ENCODE measurements at regions of chr1 and their contacts with region 1.

Region 1: GRCh38 chr1:23964790-23965740 is 5.4 kb downstream of the PNRC2 start:
- DNase-seq: no peak
- ATAC-seq: no peak
- H3K4me3 ChIP-seq: no peak overlapping the region
- H3K27ac ChIP-seq: no peak overlapping the region
- H3K4me1 ChIP-seq: 0 out of 2 replicates have a peak, but pooled peaks cover 6% of the 10 kb centered on the region
- H3K27me3 ChIP-seq: no peaks in the 10 kb centered on the region
- CTCF ChIP-seq: no peak

Region 2: GRCh38 chr1:23867953-23868556 is 97.0 kb before region 1 on chr1 and contains the start of gene FUCA1:
- CTCF ChIA-PET with region 1: no interaction called
- POLR2A ChIA-PET with region 1: interaction called, 3 read pairs
- intact Hi-C with region 1: loop called (anchors 5 kb)
- DNase-seq: peak; percentile 98
- ATAC-seq: peak; percentile 90
- H3K4me3 ChIP-seq: peak within 1 kb of the TSS; percentile 82
- H3K27ac ChIP-seq: no peak within 1 kb of the TSS
- H3K4me1 ChIP-seq: peaks cover 35% of the 10 kb centered on the region
- H3K27me3 ChIP-seq: no peaks in the 10 kb centered on the region
- CTCF ChIP-seq: peak; percentile 84
- total RNA-seq, gene FUCA1: 20.3 and 23.4 TPM in 2 replicates

Region 3: DNA sequence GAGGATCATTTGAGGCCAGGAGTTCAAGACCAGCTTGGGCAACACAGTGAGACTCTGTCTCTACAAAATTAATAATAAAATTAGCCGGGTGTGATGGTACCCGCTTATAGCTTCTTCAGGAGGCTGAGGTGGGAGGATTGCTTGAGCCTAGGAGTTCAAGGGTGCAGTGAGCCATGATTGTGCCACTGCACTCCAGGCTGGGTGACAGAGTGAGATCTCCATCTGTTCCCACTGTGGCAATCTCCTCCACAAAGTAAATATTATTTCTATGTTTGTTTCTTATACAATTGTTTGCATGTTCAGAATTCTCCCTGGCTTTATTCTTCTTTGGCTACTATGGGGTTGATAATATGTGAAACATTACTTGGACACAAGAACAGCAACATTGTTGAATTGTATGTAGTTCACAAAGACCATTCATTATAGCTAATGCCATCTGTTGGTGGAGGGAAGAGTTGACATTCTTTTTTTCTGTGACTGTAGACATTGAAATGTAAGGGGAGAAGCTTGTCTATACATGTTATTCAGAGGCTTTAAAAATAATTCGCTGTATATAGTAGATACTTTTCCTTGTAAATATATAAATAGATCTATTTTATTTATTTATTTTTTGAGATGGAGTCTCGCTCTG is 62.9 kb after region 1 on chr1:
- CTCF ChIA-PET with region 1: no interaction called
- POLR2A ChIA-PET with region 1: no interaction called
- intact Hi-C with region 1: loop called (anchors 2 kb)
- DNase-seq: peak; percentile 74
- ATAC-seq: peak; percentile 85
- H3K4me3 ChIP-seq: no peak overlapping the region
- H3K27ac ChIP-seq: no peak overlapping the region
- H3K4me1 ChIP-seq: peaks cover 2% of the 10 kb centered on the region
- H3K27me3 ChIP-seq: no peaks in the 10 kb centered on the region
- CTCF ChIP-seq: peak; percentile 70

Region 4: GRCh38 chr1:24047101-24047459 is 82.0 kb after region 1 on chr1:
- CTCF ChIA-PET with region 1: interaction called, 6 read pairs
- POLR2A ChIA-PET with region 1: interaction called, 5 read pairs
- intact Hi-C with region 1: loop called (anchors 5 kb)
- DNase-seq: peak; percentile 89
- ATAC-seq: peak; percentile 71
- H3K4me3 ChIP-seq: peak overlapping the region; percentile 38; the same call in 1 of the 2 replicates
- H3K27ac ChIP-seq: peak overlapping the region; percentile 87
- H3K4me1 ChIP-seq: peaks cover 30% of the 10 kb centered on the region
- H3K27me3 ChIP-seq: no peaks in the 10 kb centered on the region
- CTCF ChIP-seq: peak; percentile 26; the same call in 1 of the 2 replicates

Region 5: DNA sequence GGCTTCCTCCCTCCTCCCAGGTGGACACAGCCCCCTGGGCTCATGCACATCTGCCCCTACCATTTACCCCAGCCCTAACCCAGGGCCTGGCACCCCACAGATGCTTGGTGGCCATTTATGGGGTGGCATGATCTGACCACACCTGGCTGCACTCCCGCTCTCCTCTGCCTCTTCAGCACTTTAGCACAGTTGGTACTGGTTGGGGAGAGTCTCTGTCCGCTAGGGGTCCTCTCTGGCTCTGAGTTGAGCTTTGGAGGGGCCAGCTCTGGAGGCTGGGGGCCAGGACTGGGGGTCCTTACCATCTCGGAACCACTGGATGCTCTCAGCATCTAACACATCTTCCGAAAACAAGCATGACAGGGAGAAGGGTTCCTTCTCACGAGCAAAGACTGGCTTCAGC is 129.5 kb after region 1 on chr1:
- CTCF ChIA-PET with region 1: no interaction called
- POLR2A ChIA-PET with region 1: no interaction called
- intact Hi-C with region 1: no loop called
- DNase-seq: no peak
- ATAC-seq: no peak
- H3K4me3 ChIP-seq: no peak overlapping the region
- H3K27ac ChIP-seq: no peak overlapping the region
- H3K4me1 ChIP-seq: no peaks in the 10 kb centered on the region
- H3K27me3 ChIP-seq: no peaks in the 10 kb centered on the region
- CTCF ChIP-seq: peak; percentile 27; the same call in 1 of the 2 replicates